ENCODE measurements at regions of chr19 and their contacts with region 1.

Region 1: DNA sequence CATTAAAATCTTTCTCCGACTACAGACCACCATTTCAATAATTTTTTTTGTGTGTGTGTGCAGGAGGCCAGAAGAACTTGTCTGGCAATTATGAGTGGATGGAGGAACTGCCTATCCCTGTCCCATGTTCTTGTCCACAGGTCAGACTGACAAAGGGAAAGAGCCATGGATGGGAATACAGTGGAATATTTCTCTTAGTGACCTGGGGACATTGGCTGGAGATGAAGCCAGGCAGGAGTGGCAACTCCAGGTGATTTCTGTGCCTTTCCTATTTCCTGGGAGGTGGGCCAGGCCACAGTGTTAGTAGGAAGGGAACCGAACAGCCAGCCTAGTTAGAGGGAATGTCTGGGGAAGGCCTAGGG is 3.7 kb downstream of the PSG9 start:
- H3K4me3 ChIP-seq: no peak overlapping the region
- H3K27ac ChIP-seq: peak overlapping the region; percentile 58
- H3K4me1 ChIP-seq: peaks cover 3% of the 10 kb centered on the region; the same call in 1 of the 2 replicates
- CTCF ChIP-seq: no peak

Region 2: DNA sequence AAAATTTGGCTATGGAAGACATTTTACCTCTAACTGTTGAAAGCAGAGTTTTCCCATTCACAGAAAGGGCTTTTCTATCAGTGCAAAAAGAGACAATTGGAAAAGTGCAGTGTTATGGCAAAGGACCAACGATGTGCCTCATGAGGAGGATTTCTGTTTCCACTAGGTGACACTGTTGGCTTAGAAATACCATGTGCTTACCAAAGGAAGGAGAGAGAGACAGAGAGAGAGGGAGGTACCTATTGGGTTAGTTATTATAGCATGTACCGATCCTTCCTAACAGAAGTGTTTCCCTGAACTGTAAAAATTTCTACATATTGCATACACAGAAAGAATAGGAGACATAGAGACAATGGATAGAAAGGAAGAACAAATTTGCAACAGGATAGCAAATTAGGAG is 36.3 kb before region 1 on chr19:
- CTCF ChIA-PET with region 1: interaction called, 21 read pairs
- POLR2A ChIA-PET with region 1: no interaction called
- H3K4me3 ChIP-seq: no peak overlapping the region
- H3K27ac ChIP-seq: no peak overlapping the region
- H3K4me1 ChIP-seq: peaks cover 1% of the 10 kb centered on the region; the same call in 1 of the 2 replicates
- CTCF ChIP-seq: peak; percentile 69

Region 3: DNA sequence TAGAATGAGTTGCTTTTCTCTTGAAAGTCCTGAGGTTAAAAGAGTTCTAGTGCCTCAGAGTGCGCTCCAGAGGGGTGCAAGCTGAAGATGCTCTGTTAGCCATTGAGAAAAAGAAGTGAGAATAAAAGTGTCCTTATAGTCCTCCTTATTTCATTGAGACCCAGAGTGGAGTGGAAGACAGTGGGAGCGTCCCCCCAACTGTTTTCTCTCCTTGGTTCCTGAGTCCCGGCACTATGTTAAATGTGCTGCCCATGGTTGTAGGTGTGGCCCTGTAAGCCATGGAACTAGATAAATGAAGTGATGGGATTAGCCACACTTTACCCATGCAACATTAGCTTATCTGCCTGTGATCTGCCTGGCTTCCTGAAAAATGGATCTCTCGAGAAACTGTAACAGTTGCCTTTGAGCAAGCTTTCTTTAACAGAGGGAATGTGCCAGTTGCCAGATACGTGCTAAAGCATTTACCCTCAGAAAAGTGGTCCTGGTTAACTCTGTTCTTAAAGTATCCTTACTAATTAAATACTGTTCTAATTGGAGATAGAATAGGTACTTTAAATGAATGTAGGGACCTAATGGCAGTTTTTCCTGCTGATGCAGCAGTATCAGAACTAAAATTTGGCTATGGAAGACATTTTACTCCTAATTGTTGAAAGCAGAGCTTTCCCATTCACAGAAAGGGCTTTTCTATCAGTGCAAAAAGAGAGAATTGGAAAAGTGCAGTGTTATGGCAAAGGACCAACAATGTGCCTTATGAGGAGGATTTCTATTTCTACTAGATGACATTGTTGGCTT is 25.1 kb after region 1 on chr19:
- CTCF ChIA-PET with region 1: interaction called, 13 read pairs
- POLR2A ChIA-PET with region 1: no interaction called
- H3K4me3 ChIP-seq: no peak overlapping the region
- H3K27ac ChIP-seq: no peak overlapping the region
- H3K4me1 ChIP-seq: 0 out of 2 replicates have a peak, but pooled peaks cover 3% of the 10 kb centered on the region
- CTCF ChIP-seq: no peak

Region 4: DNA sequence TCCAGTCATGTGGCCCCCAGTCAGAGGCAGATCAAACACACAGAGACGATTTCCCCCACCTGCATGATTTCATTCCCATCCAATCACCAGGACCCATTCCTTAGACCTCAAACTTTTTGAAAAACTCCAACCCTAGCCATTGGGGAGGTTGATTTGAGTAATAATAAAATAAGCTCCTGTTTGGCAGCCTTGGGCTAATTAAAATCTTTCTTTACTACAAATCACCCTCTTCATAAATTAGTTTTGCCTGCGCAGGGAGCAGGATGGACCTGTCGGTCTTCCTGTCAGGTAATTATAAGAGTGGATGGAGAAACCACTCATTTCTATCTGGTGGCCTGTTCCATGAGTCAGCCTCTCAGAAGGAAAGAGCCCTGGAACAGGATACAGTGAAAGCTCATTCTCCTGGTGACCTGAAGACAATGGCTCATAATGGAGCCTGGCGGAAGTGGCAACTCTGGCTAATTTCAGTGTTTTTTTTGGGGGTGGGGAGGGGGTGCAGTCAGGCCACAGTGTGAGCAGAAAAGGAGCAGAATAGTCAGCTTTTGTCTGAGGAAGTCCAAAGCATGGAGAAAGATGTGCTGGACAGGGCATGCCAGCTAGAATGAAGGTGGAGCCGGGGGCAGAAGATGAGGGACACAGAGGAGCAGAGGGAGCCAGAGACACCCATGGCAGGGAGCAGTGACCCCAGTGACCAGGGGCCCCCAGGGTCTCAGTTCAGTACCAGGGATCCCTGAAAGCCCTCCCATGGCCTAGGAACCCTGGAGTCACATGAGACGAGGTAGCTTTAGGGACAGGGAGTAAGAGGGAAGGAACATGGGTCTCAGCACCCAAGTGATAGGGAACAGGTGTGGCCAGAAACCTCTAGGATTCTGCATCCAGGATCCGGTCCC is 35.5 kb after region 1 on chr19:
- CTCF ChIA-PET with region 1: interaction called, 15 read pairs
- POLR2A ChIA-PET with region 1: no interaction called
- H3K4me3 ChIP-seq: no peak overlapping the region
- H3K27ac ChIP-seq: no peak overlapping the region
- H3K4me1 ChIP-seq: no peaks in the 10 kb centered on the region
- CTCF ChIP-seq: no peak

Measured in HEK293 (cell line).